Breast epithelium (tissue), 4 donors: ENCODE measurements at regions of chr22 and their contacts with region 1.

Region 1: GRCh38 chr22:38796262-38796957 is 2.5 kb upstream of the DNAL4 start:
- DNase-seq: no peak
- H3K4me3 ChIP-seq: no peak overlapping the region
- H3K27ac ChIP-seq: no peak overlapping the region
- H3K4me1 ChIP-seq: no peaks in the 10 kb centered on the region
- H3K27me3 ChIP-seq: no peaks in the 10 kb centered on the region
- CTCF ChIP-seq: no peak
- POLR2A ChIP-seq: no peak

Region 2: DNA sequence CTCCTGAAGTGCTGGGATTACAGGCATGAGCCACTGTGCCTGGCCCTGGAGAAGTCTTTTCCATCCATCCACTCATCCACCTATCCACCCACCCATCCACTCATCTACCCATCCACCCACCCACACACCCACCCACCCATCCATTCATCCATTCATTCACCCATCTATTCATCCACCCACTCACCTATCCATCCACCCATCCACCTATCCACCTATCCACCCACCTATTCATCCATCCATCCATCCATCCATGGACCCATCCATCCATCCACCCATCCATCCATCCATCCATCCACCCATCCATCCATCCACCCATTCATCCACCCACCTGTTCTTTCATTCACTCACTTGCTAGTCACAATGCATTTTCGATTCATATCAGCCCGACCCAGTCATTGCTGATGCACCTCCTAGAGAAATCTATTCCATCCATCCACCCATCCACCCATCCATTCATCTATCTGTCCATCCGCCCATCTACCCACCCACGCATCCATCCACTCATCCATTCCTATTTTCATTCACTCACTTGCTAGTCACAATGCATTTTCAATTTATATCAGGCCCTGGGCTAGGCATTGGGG is 23.0 kb before region 1 on chr22:
- intact Hi-C with region 1: loop called (anchors 1 kb)
- DNase-seq: no peak
- H3K4me3 ChIP-seq: no peak overlapping the region
- H3K27ac ChIP-seq: no peak overlapping the region
- H3K4me1 ChIP-seq: no peaks in the 10 kb centered on the region
- H3K27me3 ChIP-seq: no peaks in the 10 kb centered on the region
- CTCF ChIP-seq: no peak
- POLR2A ChIP-seq: no peak

Region 3: DNA sequence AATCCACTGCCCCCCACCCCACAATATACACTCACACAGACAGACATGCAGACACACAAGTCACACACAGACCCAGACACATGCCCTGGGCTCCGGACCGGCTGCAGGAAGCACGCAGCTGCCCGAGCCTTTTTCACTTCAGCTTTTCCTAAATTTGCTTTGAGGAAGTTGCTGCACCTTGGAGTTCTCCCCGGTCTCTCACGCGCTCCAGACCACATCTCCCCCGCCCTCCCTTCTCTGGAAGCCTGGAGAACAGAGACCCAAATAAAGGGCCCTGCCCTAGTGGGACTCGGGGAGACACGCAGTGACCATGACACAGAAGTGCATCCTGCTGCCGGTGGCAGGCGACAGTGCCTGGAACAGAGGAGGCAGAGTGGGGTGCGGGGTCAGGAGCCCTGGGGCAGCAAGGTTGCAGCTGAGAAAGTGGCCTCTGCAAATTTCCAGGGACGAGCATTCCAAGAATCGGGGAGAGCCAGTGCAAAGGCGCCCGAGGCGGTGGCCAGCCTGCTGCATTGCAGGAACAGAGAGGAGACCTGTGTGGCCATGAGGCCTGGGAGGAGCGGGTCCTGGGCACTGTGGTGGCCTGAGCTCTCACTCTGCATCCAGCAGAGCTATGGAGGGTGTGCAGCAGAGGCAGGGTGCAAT is 503.9 kb after region 1 on chr22:
- intact Hi-C with region 1: no loop called
- DNase-seq: peak in 1 of 2 donors; percentile 79
- H3K4me3 ChIP-seq: peak overlapping the region in 1 of 3 donors; percentile 45
- H3K27ac ChIP-seq: peak overlapping the region; percentile 76 to 91
- H3K4me1 ChIP-seq: peaks cover 7 to 31% of the 10 kb centered on the region in 2 donors
- H3K27me3 ChIP-seq: no peaks in the 10 kb centered on the region
- CTCF ChIP-seq: no peak
- POLR2A ChIP-seq: no peak